Caco-2 (cell line): ENCODE measurements at regions of chr11 and their contacts with region 1.

Region 1: GRCh38 chr11:43358801-43359421 is at the start of gene TTC17:
- DNase-seq: peak; percentile 95
- H3K4me3 ChIP-seq: peak within 1 kb of the TSS; percentile 93
- H3K4me3 Mint-ChIP-seq: peak within 1 kb of the TSS; percentile 96
- H3K27ac Mint-ChIP-seq: peak within 1 kb of the TSS; percentile 98
- H3K4me1 ChIP-seq: peaks cover 4% of the 10 kb centered on the region; the same call in 1 of the 2 replicates
- H3K4me1 Mint-ChIP-seq: no peaks in the 10 kb centered on the region
- H3K27me3 ChIP-seq: no peaks in the 10 kb centered on the region
- H3K27me3 Mint-ChIP-seq: no peaks in the 10 kb centered on the region
- CTCF ChIP-seq: no peak
- total RNA-seq, gene TTC17: 73.1 and 79.3 TPM in 2 replicates

Region 2: DNA sequence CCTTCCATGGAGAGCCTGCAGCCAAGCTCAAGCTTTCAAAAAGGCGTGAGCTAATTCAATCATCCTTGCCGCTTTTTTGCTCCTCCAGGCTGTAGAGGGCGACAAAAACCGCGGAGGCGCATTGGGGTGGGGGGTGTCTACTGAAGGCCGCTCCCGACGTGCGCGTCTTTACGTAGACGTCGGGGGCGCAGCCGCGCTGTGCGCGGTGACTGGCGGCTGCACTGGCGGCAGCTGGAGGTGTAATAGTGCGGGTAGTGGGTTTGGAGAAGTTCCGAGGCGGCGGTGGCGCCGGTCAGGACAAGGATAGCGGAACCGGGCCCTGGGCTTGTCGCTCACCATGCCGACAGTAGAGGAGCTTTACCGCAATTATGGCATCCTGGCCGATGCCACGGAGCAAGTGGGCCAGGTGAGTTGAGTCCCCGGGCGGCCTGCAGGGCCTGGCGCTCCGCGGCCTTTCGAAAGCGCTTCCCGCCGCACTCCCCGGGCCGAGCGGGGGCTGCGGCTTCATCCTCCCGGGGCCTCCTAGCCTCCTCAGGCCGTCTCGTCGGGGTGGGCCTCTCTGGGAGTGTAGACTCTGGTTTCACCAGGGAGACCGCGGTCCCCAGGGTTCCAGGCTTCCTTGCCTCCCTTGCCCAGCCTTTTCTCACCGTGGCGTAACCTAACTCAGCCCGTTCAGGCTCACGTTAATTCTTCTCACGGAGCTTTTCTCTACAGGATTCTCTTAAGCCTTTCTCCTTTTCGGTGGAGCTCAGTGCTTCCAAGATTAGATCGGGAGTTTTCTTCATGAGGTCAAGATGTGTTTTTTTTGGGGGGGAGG is 46.9 kb before region 1 on chr11 and contains the start of gene API5:
- CTCF ChIA-PET with region 1: interaction called, 20 read pairs
- POLR2A ChIA-PET with region 1: interaction called, 11 read pairs
- intact Hi-C with region 1: loop called (anchors 1 kb)
- DNase-seq: peak; percentile 95 to 96
- H3K4me3 ChIP-seq: peak within 1 kb of the TSS; percentile 79
- H3K4me3 Mint-ChIP-seq: peak within 1 kb of the TSS; percentile 99
- H3K27ac Mint-ChIP-seq: peak within 1 kb of the TSS; percentile 97
- H3K4me1 ChIP-seq: peaks cover 6% of the 10 kb centered on the region; the same call in 1 of the 2 replicates
- H3K4me1 Mint-ChIP-seq: peaks cover 7% of the 10 kb centered on the region
- H3K27me3 ChIP-seq: no peaks in the 10 kb centered on the region
- H3K27me3 Mint-ChIP-seq: no peaks in the 10 kb centered on the region
- CTCF ChIP-seq: peak; percentile 67 to 95
- total RNA-seq, gene API5: 129 and 140 TPM in 2 replicates

Region 3: GRCh38 chr11:43376594-43376993 is 17.7 kb after region 1 on chr11:
- CTCF ChIA-PET with region 1: interaction called, 4 read pairs
- POLR2A ChIA-PET with region 1: no interaction called
- intact Hi-C with region 1: loop called (anchors 2 kb)
- DNase-seq: peak in 1 of 2 experiments; percentile 6
- H3K4me3 ChIP-seq: no peak overlapping the region
- H3K4me3 Mint-ChIP-seq: no peak overlapping the region
- H3K27ac Mint-ChIP-seq: peak overlapping the region; percentile 22
- H3K4me1 ChIP-seq: peaks cover 5% of the 10 kb centered on the region; the same call in 1 of the 2 replicates
- H3K4me1 Mint-ChIP-seq: no peaks in the 10 kb centered on the region
- H3K27me3 ChIP-seq: no peaks in the 10 kb centered on the region
- H3K27me3 Mint-ChIP-seq: no peaks in the 10 kb centered on the region
- CTCF ChIP-seq: no peak

Region 4: DNA sequence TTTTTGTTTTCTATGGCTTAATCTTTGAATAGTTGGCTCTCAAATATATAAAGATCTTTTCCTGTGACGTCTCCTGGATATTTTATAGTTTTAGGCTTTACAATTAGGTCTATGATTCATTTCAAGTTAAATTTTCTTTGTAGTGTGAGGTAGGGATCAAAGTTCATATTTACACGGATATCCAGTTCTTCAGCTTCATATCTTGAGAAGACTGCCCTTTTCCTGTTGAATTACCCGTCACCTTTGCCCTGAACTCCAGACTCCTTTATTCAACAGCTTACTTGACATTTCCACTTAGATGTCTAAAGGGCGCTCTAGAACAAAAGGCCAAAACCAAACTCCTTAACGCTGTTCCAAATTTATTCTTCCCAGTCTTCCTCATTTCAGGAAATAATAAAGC is 51.5 kb after region 1 on chr11:
- CTCF ChIA-PET with region 1: interaction called, 7 read pairs
- POLR2A ChIA-PET with region 1: interaction called, 4 read pairs
- intact Hi-C with region 1: loop called (anchors 2 kb)
- DNase-seq: peak; percentile 68 to 72
- H3K4me3 ChIP-seq: no peak overlapping the region
- H3K4me3 Mint-ChIP-seq: peak overlapping the region; percentile 63
- H3K27ac Mint-ChIP-seq: peak overlapping the region; percentile 58
- H3K4me1 ChIP-seq: peaks cover 30% of the 10 kb centered on the region
- H3K4me1 Mint-ChIP-seq: peaks cover 23% of the 10 kb centered on the region
- H3K27me3 ChIP-seq: no peaks in the 10 kb centered on the region
- H3K27me3 Mint-ChIP-seq: no peaks in the 10 kb centered on the region
- CTCF ChIP-seq: no peak

Region 5: DNA sequence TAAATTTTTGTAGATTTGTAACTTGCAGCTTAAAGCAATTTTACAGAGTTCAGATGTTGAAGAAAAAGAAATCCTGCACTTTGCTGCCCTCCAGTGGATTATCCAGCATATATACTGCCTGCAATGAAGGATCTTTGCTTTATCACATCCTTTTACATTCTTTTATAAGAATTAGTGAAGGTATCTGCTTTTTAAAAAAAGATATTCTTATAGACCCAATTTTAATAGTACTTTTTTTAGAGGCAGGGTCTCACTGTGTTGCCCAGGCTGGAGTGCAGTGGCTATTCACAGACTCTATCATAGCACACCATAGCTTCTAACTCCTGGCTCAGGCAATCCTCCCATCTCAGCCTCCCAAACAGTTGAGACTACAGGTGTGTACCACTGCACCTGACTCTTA is 60.5 kb after region 1 on chr11:
- CTCF ChIA-PET with region 1: interaction called, 5 read pairs
- POLR2A ChIA-PET with region 1: no interaction called
- intact Hi-C with region 1: loop called (anchors 2 kb)
- DNase-seq: peak in 1 of 2 experiments; percentile 55
- H3K4me3 ChIP-seq: no peak overlapping the region
- H3K4me3 Mint-ChIP-seq: no peak overlapping the region
- H3K27ac Mint-ChIP-seq: no peak overlapping the region
- H3K4me1 ChIP-seq: no peaks in the 10 kb centered on the region
- H3K4me1 Mint-ChIP-seq: no peaks in the 10 kb centered on the region
- H3K27me3 ChIP-seq: no peaks in the 10 kb centered on the region
- H3K27me3 Mint-ChIP-seq: no peaks in the 10 kb centered on the region
- CTCF ChIP-seq: peak; percentile 63 to 65